Aorta (tissue), 5 donors: ENCODE measurements at regions of chr1 and their contacts with region 1.

Region 1: GRCh38 chr1:210400043-210400840 is 71.5 kb downstream of the HHAT start:
- DNase-seq: peak in 1 of 2 donors; percentile 50
- ATAC-seq: peak; percentile 77
- H3K4me3 ChIP-seq: no peak overlapping the region
- H3K27ac ChIP-seq: no peak overlapping the region
- H3K4me1 ChIP-seq: no peaks in the 10 kb centered on the region
- H3K27me3 ChIP-seq: no peaks in the 10 kb centered on the region

Region 2: GRCh38 chr1:210143465-210144062 is 256.7 kb before region 1 on chr1:
- intact Hi-C with region 1: loop called (anchors 5 kb)
- DNase-seq: peak; percentile 80 to 90
- ATAC-seq: no peak
- H3K4me3 ChIP-seq: no peak overlapping the region
- H3K27ac ChIP-seq: no peak overlapping the region
- H3K4me1 ChIP-seq: no peaks in the 10 kb centered on the region
- H3K27me3 ChIP-seq: no peaks in the 10 kb centered on the region

Region 3: DNA sequence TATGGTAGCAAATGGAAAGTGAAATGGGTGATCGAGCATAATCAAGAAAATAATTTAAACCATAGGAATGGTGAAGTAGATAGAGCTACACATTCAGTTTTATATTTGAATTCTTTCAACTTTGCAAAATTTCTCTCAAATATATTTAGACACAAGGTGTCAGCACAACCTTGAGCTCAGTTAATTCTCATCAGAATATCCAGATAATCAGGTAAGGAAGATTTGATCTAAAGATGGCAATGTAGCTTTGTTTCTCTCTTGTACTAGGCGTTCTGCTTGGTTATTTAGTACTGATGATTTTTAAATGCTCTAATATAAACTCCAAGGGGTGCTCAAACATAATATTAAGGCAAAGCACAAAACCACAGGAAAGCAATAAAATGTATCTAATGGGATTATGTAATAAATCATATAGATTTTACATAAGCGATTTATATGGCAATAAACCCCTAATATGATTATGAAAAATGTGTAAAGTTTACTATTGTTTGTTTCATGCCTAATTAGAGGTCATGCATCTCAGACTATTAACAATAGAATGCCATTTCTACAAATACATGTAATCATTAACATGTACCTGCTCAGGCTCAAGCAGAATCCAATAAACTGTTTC is 200.0 kb before region 1 on chr1:
- intact Hi-C with region 1: loop called in 1 of 2 experiments (anchors 10 kb)
- DNase-seq: no peak
- ATAC-seq: no peak
- H3K4me3 ChIP-seq: no peak overlapping the region
- H3K27ac ChIP-seq: no peak overlapping the region
- H3K4me1 ChIP-seq: no peaks in the 10 kb centered on the region
- H3K27me3 ChIP-seq: no peaks in the 10 kb centered on the region

Region 4: DNA sequence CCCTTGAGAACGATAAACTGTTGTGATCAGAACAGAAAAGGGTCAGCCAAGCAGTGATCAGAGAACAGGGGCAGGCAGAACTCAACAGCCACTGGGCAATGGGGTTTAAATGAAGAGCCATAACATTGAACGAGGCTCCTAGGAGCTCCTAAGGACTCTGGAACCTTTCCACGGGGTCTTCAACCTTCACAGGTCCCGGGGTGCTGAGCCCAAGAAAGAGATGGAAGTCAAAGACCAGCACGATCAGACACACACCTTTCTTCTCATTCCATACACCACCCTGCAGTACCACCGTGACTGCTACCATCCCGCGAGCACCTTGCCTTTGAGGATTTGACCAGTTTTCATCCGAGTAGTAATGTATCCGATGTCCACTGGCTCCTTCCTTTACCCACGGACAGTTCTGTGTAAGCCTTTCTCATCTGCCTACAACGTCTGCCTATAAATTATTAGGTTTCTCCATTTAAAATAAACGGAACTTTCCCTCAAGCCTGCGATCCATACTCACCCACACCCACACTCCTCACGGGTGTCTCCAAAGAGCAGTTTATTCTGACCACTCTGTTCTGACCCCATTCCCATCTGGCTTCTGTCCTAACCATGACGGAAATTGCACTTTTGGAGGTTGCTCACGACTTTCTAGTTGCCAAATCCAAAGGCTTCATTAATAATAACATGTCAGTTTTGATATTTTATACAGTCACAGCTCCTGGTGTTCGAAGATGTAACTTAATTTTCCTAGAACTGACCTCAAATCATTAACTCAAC is 88.3 kb before region 1 on chr1:
- intact Hi-C with region 1: loop called (anchors 5 kb)
- DNase-seq: no peak
- ATAC-seq: peak; percentile 53
- H3K4me3 ChIP-seq: no peak overlapping the region
- H3K27ac ChIP-seq: no peak overlapping the region
- H3K4me1 ChIP-seq: no peaks in the 10 kb centered on the region
- H3K27me3 ChIP-seq: no peaks in the 10 kb centered on the region

Region 5: GRCh38 chr1:210360852-210361477 is 39.3 kb before region 1 on chr1:
- intact Hi-C with region 1: loop called (anchors 1 to 2 kb)
- DNase-seq: no peak
- ATAC-seq: peak; percentile 78
- H3K4me3 ChIP-seq: no peak overlapping the region
- H3K27ac ChIP-seq: no peak overlapping the region
- H3K4me1 ChIP-seq: no peaks in the 10 kb centered on the region
- H3K27me3 ChIP-seq: no peaks in the 10 kb centered on the region